ENCODE measurements at regions of chr4 and their contacts with region 1.

Region 1: GRCh38 chr4:60201057-60201673 is 999.0 kb upstream of the ADGRL3 start:
- DNase-seq: peak in 1 of 2 experiments; percentile 19
- H3K4me3 ChIP-seq: no peak overlapping the region
- H3K27ac ChIP-seq: no peak overlapping the region
- H3K4me1 ChIP-seq: no peaks in the 10 kb centered on the region
- H3K27me3 ChIP-seq: no peaks in the 10 kb centered on the region
- CTCF ChIP-seq: peak; percentile 82

Region 2: GRCh38 chr4:59247032-59247431 is 954.1 kb before region 1 on chr4:
- CTCF ChIA-PET with region 1: no interaction called
- POLR2A ChIA-PET with region 1: no interaction called
- intact Hi-C with region 1: loop called (anchors 2 kb)
- DNase-seq: no peak
- H3K4me3 ChIP-seq: no peak overlapping the region
- H3K27ac ChIP-seq: no peak overlapping the region
- H3K4me1 ChIP-seq: no peaks in the 10 kb centered on the region
- H3K27me3 ChIP-seq: no peaks in the 10 kb centered on the region
- CTCF ChIP-seq: peak; percentile 52

Region 3: GRCh38 chr4:60432911-60433310 is 231.7 kb after region 1 on chr4:
- CTCF ChIA-PET with region 1: no interaction called
- POLR2A ChIA-PET with region 1: no interaction called
- intact Hi-C with region 1: no loop called
- DNase-seq: no peak
- H3K4me3 ChIP-seq: no peak overlapping the region
- H3K27ac ChIP-seq: no peak overlapping the region
- H3K4me1 ChIP-seq: no peaks in the 10 kb centered on the region
- H3K27me3 ChIP-seq: no peaks in the 10 kb centered on the region
- CTCF ChIP-seq: no peak